ENCODE measurements at regions of chr5 and their contacts with region 1.

Region 1: GRCh38 chr5:90709323-90710155 is 150.9 kb downstream of the ADGRV1 start:
- DNase-seq: no peak

Region 2: GRCh38 chr5:90612919-90613318 is 96.6 kb before region 1 on chr5:
- intact Hi-C with region 1: no loop called
- DNase-seq: no peak

Region 3: GRCh38 chr5:90740244-90740799 is 30.8 kb after region 1 on chr5:
- intact Hi-C with region 1: no loop called
- DNase-seq: no peak

Region 4: DNA sequence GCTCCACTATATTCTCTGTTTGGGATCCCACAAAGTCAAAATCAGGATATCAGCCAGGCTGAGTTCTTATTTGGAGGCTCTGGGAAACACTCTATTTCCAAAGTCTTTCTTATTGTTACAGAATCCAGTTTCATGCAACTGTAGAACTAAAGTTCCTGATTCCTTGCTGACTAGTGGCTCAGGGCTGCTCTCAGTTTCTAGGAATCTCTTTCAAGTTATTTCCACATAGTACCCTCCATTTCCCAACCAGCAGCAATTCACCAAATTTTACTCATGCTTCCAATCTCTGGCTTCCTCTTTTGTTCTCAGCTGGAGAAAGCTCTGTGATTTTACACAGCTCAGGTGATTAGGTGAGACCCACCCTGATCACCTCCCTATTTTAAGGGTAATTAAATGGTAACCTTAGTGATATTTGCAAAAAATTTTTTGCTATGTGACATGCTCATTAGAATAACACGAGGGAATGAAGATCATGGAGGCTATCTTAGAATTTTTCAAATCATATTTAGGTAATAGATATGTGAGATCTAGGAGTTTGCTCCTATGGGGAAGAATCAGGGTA is 1468.5 kb after region 1 on chr5:
- intact Hi-C with region 1: loop called in 1 of 2 experiments (anchors 10 kb)
- DNase-seq: no peak